Activated T-helper 1 cell treated with anti-CD3 and anti-CD28 coated beads, Interleukin-12 subunit alpha, Interleukin-12 subunit beta, Interleukin-2, Interleukin-4 antibody, amounts not matched to agents 30 ng/mL and 10 ng/mL and 1 ng/mL, durations not matched to agents 14 hours and 24 hours and 36 hours (primary cell): ENCODE measurements at regions of chr7 and their contacts with region 1.

Region 1: DNA sequence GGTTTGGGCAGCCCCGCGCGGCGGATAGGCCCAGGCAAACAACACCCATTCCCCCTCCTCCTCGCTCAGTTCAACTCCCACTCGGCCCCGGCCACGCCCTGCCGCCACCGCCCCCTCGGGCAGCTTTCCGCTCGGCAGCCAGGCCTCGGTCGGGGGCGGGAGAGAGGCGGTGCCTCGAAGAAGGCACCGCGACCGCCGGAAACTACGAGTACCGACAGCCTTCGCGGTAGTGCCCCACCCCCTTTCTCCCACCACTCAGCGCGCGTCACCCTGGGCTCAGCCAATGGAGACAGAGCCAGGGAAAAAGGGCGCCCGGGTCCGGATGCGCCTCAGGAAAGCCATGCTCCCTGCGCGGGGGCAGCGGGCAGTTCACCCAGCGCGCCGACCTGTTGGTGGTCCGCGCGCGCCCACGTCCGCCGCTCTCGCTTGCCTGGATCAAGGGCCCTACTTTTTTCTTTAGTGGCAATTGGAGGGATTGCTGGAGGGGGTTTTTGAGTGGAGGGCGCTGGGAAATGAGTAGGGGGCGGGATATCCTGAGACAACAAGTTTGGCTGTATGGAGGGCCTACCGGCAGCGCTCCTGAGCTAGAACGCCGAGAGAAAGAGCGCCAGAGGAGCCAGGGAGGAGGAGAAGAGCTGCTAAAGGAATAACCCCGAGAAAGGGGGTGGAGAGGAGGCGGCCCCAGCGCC is 557 bp upstream of the SP4 start:
- DNase-seq: peak; percentile 100
- H3K4me3 Mint-ChIP-seq: peak overlapping the region; percentile 100
- H3K27ac Mint-ChIP-seq: peak overlapping the region; percentile 100
- H3K4me1 Mint-ChIP-seq: peaks cover 67% of the 10 kb centered on the region
- H3K27me3 Mint-ChIP-seq: no peaks in the 10 kb centered on the region

Region 2: DNA sequence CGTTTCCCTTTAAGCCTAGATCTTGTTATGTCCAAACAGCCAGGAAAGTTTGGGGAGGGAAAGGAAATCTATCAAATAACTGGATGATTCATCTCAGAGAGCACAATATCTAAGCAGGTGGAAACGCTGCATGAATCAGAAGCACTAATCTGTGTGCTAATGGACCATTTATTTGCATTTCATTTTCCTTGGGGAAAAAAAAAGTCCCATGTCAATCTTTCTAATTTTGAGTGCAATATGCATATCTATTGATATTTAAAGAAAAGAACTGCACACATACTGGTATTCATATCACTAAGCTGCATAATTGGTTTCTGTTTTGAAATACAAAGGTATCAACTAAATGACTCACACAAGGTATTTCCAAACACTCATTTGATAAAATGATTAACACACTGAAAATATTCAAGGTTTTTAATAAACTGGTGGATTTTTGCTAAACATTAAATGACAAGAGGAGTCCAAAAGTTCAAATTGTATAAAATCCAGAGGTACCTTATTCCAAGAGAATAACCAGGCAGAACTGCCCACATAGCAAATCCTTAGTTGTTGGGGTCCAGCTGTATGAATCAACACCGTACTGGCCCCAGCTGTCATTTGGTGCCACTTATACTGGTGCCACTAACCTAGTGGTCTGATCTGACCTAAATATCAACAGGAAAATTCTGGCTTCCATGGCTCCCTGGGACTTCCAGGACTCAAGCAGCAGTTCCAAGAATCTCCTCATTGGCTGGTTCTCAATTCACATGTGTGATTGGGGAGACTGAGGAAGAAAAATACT is 121.7 kb before region 1 on chr7:
- intact Hi-C with region 1: loop called (anchors 1 kb)
- DNase-seq: no peak
- H3K4me3 Mint-ChIP-seq: no peak overlapping the region
- H3K27ac Mint-ChIP-seq: no peak overlapping the region
- H3K4me1 Mint-ChIP-seq: peaks cover 18% of the 10 kb centered on the region
- H3K27me3 Mint-ChIP-seq: no peaks in the 10 kb centered on the region

Region 3: DNA sequence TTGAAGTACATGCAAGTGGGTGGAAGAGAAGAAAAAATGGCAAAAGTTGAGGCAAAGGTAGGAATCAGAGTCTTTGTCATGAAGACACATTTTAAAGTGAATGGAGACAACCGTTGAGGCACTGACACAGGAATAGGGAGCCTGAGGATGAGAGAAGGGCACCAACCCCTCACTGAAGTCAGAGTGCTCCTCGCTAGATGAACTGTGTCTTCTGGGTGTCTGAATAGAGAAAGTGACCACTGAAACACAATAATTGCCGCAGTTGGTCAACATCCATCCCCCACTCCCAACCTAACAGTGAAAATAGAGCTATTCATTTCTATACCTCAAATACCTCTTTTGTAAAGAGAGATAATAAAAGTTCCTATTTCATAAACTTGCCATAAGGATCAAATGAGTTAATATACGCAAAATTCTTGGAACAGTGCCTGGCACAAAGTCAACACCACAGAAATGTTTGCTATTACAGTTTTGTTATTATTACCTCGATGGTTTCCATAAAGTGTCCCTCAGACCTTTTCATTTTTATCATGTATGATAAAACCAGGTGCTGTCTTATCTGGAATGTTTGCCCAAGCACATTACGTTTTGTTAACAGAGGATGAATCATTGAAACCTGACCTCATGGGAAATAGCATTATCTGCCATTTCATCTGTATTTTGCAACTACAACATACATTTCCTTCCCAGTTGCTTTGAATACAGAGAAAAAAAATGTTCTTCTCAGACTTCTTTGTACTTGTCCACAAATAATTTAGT is 61.3 kb before region 1 on chr7:
- intact Hi-C with region 1: loop called (anchors 1 kb)
- DNase-seq: no peak
- H3K4me3 Mint-ChIP-seq: peak overlapping the region; percentile 9
- H3K27ac Mint-ChIP-seq: peak overlapping the region; percentile 25
- H3K4me1 Mint-ChIP-seq: peaks cover 70% of the 10 kb centered on the region
- H3K27me3 Mint-ChIP-seq: no peaks in the 10 kb centered on the region

Region 4: DNA sequence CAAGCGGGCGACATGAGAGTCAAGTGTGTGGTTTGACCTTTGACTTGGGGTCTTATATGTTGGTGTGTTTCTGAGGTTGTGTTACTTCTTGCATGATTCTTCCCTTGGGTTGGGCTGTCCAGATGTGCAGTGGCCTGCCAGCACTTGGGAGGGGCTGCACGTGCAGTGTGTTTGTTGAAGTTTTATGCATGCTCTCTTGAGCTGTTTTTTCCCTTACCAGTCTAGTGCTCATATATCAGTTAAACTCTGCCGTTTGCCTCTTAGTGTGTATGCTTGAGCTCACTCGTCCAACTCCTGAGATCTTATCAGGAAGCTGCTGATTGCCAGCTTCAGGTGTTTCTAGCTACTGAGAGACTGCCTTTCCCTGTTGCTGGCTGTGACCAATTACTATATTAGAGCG is 23.6 kb after region 1 on chr7:
- intact Hi-C with region 1: loop called (anchors 2 kb)
- DNase-seq: no peak
- H3K4me3 Mint-ChIP-seq: no peak overlapping the region
- H3K27ac Mint-ChIP-seq: no peak overlapping the region
- H3K4me1 Mint-ChIP-seq: peaks cover 34% of the 10 kb centered on the region
- H3K27me3 Mint-ChIP-seq: no peaks in the 10 kb centered on the region

Region 5: GRCh38 chr7:21480693-21481403 is 53.5 kb after region 1 on chr7:
- intact Hi-C with region 1: no loop called
- DNase-seq: no peak
- H3K4me3 Mint-ChIP-seq: no peak overlapping the region
- H3K27ac Mint-ChIP-seq: no peak overlapping the region
- H3K4me1 Mint-ChIP-seq: peaks cover 26% of the 10 kb centered on the region
- H3K27me3 Mint-ChIP-seq: no peaks in the 10 kb centered on the region

Region 6: GRCh38 chr7:21767300-21767900 is 340.1 kb after region 1 on chr7:
- intact Hi-C with region 1: loop called (anchors 10 kb)
- DNase-seq: peak; percentile 4
- H3K4me3 Mint-ChIP-seq: no peak overlapping the region
- H3K27ac Mint-ChIP-seq: no peak overlapping the region
- H3K4me1 Mint-ChIP-seq: peaks cover 11% of the 10 kb centered on the region
- H3K27me3 Mint-ChIP-seq: peaks cover 7% of the 10 kb centered on the region

Region 7: GRCh38 chr7:22672846-22673652 is 1245.7 kb after region 1 on chr7:
- intact Hi-C with region 1: loop called (anchors 10 kb)
- DNase-seq: no peak
- H3K4me3 Mint-ChIP-seq: peak overlapping the region; percentile 6
- H3K27ac Mint-ChIP-seq: no peak overlapping the region
- H3K4me1 Mint-ChIP-seq: peaks cover 66% of the 10 kb centered on the region
- H3K27me3 Mint-ChIP-seq: peaks cover 3% of the 10 kb centered on the region